ENCODE measurements at regions of chr1 and their contacts with region 1.

Region 1: GRCh38 chr1:158087320-158087927 is 93.3 kb upstream of the CD1D start:
- DNase-seq: peak; percentile 37
- H3K4me3 ChIP-seq: no peak overlapping the region
- H3K27ac ChIP-seq: no peak overlapping the region
- H3K4me1 ChIP-seq: no peaks in the 10 kb centered on the region
- H3K27me3 ChIP-seq: no peaks in the 10 kb centered on the region
- CTCF ChIP-seq: peak; percentile 40 to 75 (median 68)
- POLR2A ChIP-seq: no peak

Region 2: GRCh38 chr1:158035976-158036583 is 51.3 kb before region 1 on chr1:
- intact Hi-C with region 1: loop called (anchors 5 kb)
- DNase-seq: peak; percentile 24
- H3K4me3 ChIP-seq: no peak overlapping the region
- H3K27ac ChIP-seq: no peak overlapping the region
- H3K4me1 ChIP-seq: no peaks in the 10 kb centered on the region
- H3K27me3 ChIP-seq: no peaks in the 10 kb centered on the region
- CTCF ChIP-seq: peak; percentile 41 to 80 (median 61)
- POLR2A ChIP-seq: no peak

Measured in prostate gland (tissue), 2 donors.